Mammary epithelial cell (primary cell): ENCODE measurements at regions of chr1 and their contacts with region 1.

Region 1: GRCh38 chr1:112383759-112384356 is 12.2 kb upstream of the CTTNBP2NL start:
- DNase-seq: no peak
- H3K4me3 ChIP-seq: no peak overlapping the region
- H3K27ac ChIP-seq: no peak overlapping the region
- H3K4me1 ChIP-seq: peaks cover 7% of the 10 kb centered on the region
- H3K27me3 ChIP-seq: no peaks in the 10 kb centered on the region
- CTCF ChIP-seq: no peak

Region 2: DNA sequence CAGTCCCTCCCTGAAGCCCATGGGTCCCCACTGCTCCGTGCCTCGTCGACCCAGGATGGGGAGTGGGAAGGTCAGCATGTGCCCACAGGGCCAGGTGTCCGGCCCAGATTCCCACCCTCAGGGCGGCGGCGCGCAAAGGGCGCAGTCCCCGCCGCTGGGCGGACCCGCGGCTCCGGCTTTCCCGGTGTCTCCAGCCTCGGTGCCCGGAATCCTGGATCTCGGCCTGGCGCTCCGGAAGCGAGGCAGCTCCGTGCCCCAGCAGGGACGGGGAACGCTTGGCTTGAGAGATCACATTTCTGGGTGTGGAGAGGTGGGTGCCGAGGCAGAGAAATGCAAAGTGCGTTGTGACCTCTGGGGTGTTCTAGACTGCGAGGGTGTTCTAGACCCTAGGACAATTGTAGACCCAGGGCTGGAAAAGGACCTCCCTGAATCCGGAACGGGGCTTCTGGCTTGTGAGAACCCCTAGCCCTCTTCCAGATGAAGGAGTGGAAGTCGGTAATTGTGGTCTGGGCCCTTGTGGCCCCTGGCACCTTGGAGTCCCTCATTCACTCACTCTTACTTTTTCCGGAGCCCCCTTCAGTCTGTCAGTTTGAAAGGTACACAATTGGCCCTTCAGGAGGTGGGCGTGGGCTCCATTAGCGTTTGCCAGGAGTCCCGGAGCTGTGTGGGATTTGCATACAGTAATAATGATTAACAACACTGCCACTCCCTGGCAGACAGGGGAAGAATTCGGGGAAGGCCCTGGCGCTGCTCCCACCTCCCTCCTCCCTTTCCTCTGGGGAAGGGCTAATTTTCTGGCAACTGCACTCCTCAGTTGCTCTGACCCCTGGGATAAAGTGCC is 392.8 kb before region 1 on chr1:
- CTCF ChIA-PET with region 1: no interaction called
- dilution Hi-C with region 1: no loop called
- in situ Hi-C with region 1: no loop called
- intact Hi-C with region 1: no loop called
- DNase-seq: peak; percentile 57
- H3K4me3 ChIP-seq: peak overlapping the region; percentile 32 to 52 (median 48)
- H3K27ac ChIP-seq: no peak overlapping the region
- H3K4me1 ChIP-seq: peaks cover 18% of the 10 kb centered on the region
- H3K27me3 ChIP-seq: peaks cover 5% of the 10 kb centered on the region
- CTCF ChIP-seq: peak; percentile 43 to 60

Region 3: DNA sequence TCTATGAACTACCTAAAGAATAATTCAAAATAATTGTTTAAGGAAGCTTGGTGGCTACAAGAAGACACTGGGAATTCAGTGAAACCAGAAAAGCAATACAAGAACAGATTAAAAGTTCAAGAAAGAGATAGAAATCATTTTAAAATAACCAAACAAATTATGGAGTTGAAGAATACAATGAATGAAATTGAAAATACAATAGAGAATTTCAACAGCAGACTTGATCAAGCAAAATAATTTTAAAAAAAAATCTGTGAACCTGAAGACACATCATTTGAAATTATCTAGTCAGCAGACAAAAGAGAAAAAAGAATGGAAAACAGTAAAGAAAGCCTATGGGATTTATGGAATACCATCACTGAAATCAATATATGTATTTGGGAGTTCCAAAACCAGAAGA is 93.7 kb after region 1 on chr1:
- CTCF ChIA-PET with region 1: no interaction called
- dilution Hi-C with region 1: loop called (anchors 5 kb)
- in situ Hi-C with region 1: no loop called
- intact Hi-C with region 1: no loop called
- DNase-seq: no peak
- H3K4me3 ChIP-seq: no peak overlapping the region
- H3K27ac ChIP-seq: no peak overlapping the region
- H3K4me1 ChIP-seq: no peaks in the 10 kb centered on the region
- H3K27me3 ChIP-seq: no peaks in the 10 kb centered on the region
- CTCF ChIP-seq: no peak